Activated CD8-positive, alpha-beta T cell treated with anti-CD3 and anti-CD28 coated beads for 36 hours (primary cell): ENCODE measurements at regions of chr2 and their contacts with region 1.

Region 1: DNA sequence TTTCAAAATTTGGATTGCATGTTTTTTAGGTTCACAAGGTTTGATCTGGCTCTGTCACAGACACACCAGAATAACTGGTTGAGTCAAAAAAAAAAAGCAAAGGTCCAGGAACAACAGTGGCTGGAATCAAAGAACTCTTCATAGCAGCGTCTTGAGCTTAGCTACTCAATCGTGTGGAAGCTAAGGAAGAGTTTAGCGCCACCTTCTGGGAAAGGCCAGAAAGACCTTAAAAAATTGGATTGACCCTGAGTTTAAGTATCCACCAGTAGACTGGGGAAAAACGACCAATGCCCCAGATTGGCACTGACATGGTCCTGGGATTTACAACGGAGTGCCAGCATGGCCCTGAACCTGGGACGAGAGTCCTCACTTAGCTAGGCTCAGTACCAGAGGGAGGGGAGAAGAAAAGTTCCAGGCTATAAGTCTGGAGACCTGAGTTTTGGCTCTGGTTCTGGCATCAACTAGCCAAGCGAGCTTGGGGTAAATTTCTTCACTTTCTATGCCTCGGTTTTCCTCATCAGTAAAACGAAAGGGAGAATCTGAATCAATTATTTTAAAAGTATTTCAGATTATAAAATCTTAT is 71.1 kb upstream of the TFCP2L1 start:
- DNase-seq: peak; percentile 49
- ATAC-seq: peak; percentile 74
- H3K4me3 Mint-ChIP-seq: no peak overlapping the region
- H3K27ac Mint-ChIP-seq: no peak overlapping the region
- H3K4me1 Mint-ChIP-seq: no peaks in the 10 kb centered on the region
- H3K27me3 Mint-ChIP-seq: no peaks in the 10 kb centered on the region
- CTCF ChIP-seq: peak; percentile 57

Region 2: GRCh38 chr2:121330891-121331290 is 25.3 kb before region 1 on chr2:
- CTCF ChIA-PET with region 1: no interaction called
- POLR2A ChIA-PET with region 1: no interaction called
- intact Hi-C with region 1: no loop called
- DNase-seq: no peak
- ATAC-seq: no peak
- H3K4me3 Mint-ChIP-seq: no peak overlapping the region
- H3K27ac Mint-ChIP-seq: no peak overlapping the region
- H3K4me1 Mint-ChIP-seq: no peaks in the 10 kb centered on the region
- H3K27me3 Mint-ChIP-seq: no peaks in the 10 kb centered on the region
- CTCF ChIP-seq: no peak

Region 3: GRCh38 chr2:121345887-121346286 is 10.3 kb before region 1 on chr2:
- CTCF ChIA-PET with region 1: interaction called, 12 read pairs
- POLR2A ChIA-PET with region 1: no interaction called
- intact Hi-C with region 1: no loop called
- DNase-seq: no peak
- ATAC-seq: no peak
- H3K4me3 Mint-ChIP-seq: no peak overlapping the region
- H3K27ac Mint-ChIP-seq: no peak overlapping the region
- H3K4me1 Mint-ChIP-seq: no peaks in the 10 kb centered on the region
- H3K27me3 Mint-ChIP-seq: no peaks in the 10 kb centered on the region
- CTCF ChIP-seq: no peak